Dendritic cell treated with granulocyte-macrophage colony-stimulating factor and Interleukin-4, amounts not matched to agents 40 ng/mL and 50 ng/mL, for 4 days (primary cell): ENCODE measurements at regions of chr17 and their contacts with region 1.

Region 1: DNA sequence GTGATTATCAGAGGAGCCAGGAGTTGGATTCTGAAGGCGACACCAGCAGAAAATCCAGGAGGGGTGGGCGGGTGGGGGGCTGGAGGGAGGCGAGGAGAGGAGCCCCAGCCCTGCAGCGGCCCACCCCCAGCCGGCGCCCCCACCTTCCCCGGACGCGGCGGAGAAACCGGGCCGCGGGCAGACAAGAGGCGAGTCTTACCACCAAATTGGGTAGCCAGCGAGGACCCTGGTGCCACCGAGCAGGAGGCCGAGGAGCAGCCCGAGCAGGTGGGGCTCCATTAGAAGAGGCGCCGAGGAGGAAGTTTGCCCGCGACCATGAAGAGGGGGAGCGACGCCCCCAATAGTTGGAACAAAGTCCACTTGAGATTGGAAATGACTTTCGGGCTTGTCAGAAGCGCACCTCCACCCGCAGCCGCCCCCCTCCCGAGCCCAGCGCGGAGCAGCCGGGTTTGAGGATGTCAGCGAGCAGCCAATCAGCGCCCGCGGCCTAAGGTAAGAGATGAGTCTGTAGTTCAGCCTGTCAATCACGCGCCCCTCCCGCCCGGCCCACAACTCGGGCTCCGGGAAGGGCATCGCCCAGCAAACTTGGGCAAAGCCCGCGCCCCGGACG is at the start of gene WNT3:
- H3K4me3 Mint-ChIP-seq: peak within 1 kb of the TSS; percentile 67
- H3K27ac Mint-ChIP-seq: no peak within 1 kb of the TSS
- H3K4me1 Mint-ChIP-seq: peaks cover 48% of the 10 kb centered on the region
- H3K27me3 Mint-ChIP-seq: peaks cover 95% of the 10 kb centered on the region

Region 2: DNA sequence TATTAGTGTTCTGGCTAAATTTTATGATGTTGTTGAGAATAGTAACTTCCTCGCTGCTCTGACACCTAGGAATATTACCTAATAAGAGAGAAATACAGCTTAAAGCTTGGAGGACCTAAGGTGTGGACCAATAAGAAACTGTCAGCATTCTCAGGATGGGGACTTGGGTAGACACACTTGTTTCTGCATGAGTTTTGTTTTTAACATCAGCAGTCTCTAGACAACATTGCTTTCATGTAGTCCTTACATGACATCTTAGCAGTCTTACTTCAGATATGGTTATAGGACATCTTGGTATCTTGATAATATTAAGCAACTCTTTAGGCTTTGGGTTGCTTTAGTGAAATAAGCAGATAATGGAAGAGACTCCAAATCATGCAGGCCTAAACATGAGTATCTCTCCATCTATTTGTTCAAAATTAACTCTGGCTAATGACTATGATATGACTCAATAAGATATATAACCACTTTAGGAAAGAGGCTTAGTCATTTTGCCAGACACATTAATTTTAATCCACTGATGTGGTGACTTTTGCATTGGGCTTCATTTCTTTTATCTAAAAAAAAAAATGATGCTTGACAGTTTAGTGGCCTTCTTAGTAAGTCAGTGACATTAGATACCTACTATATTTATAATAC is 84.5 kb before region 1 on chr17:
- intact Hi-C with region 1: loop called (anchors 10 kb)
- H3K4me3 Mint-ChIP-seq: no peak overlapping the region
- H3K27ac Mint-ChIP-seq: no peak overlapping the region
- H3K4me1 Mint-ChIP-seq: peaks cover 9% of the 10 kb centered on the region
- H3K27me3 Mint-ChIP-seq: no peaks in the 10 kb centered on the region

Region 3: GRCh38 chr17:46795379-46795952 is 23.0 kb before region 1 on chr17:
- intact Hi-C with region 1: no loop called
- H3K4me3 Mint-ChIP-seq: no peak overlapping the region
- H3K27ac Mint-ChIP-seq: no peak overlapping the region
- H3K4me1 Mint-ChIP-seq: no peaks in the 10 kb centered on the region
- H3K27me3 Mint-ChIP-seq: peaks cover 37% of the 10 kb centered on the region